Activated CD4-positive, alpha-beta T cell treated with anti-CD3 and anti-CD28 coated beads for 36 hours (primary cell): ENCODE measurements at regions of chr19 and their contacts with region 1.

Region 1: GRCh38 chr19:17358395-17358794 is 18.7 kb downstream of the PLVAP start:
- DNase-seq: no peak
- ATAC-seq: no peak
- H3K4me3 Mint-ChIP-seq: no peak overlapping the region
- H3K27ac Mint-ChIP-seq: no peak overlapping the region
- H3K4me1 Mint-ChIP-seq: no peaks in the 10 kb centered on the region
- H3K27me3 Mint-ChIP-seq: peaks cover 2% of the 10 kb centered on the region

Region 2: GRCh38 chr19:17475541-17476115 is 117.2 kb after region 1 on chr19:
- CTCF ChIA-PET with region 1: no interaction called
- POLR2A ChIA-PET with region 1: no interaction called
- intact Hi-C with region 1: no loop called
- DNase-seq: no peak
- ATAC-seq: no peak
- H3K4me3 Mint-ChIP-seq: no peak overlapping the region
- H3K27ac Mint-ChIP-seq: no peak overlapping the region
- H3K4me1 Mint-ChIP-seq: peaks cover 10% of the 10 kb centered on the region
- H3K27me3 Mint-ChIP-seq: no peaks in the 10 kb centered on the region

Region 3: DNA sequence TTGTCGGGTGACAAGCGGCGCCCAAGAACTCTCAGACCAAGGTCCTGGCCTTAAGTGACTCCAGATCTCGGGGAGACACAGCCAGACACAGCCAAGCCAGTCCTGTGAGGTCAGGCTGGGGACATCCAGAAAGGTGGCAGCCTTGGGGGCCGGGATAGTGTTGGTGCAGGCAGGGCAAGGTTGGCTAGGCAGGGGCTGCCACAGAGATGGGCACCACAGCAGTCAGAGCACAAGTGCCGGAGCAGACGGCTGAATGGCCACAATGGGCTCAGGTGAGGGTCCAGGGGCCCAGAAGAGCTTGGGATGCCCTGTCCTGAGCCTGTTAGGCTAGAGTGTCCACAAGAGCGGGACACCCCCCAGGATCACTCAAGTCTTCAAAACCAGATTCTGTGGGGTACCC is 1994.4 kb after region 1 on chr19:
- CTCF ChIA-PET with region 1: no interaction called
- POLR2A ChIA-PET with region 1: interaction called, 10 read pairs
- intact Hi-C with region 1: no loop called
- DNase-seq: no peak
- ATAC-seq: no peak
- H3K4me3 Mint-ChIP-seq: no peak overlapping the region
- H3K27ac Mint-ChIP-seq: no peak overlapping the region
- H3K4me1 Mint-ChIP-seq: peaks cover 3% of the 10 kb centered on the region
- H3K27me3 Mint-ChIP-seq: no peaks in the 10 kb centered on the region